ENCODE measurements at regions of chr12 and their contacts with region 1.

Region 1: GRCh38 chr12:125183187-125184067 is 118.2 kb downstream of the AACS start:
- DNase-seq: peak; percentile 66
- H3K4me3 ChIP-seq: no peak overlapping the region
- H3K27ac ChIP-seq: no peak overlapping the region
- H3K4me1 ChIP-seq: no peaks in the 10 kb centered on the region
- H3K27me3 ChIP-seq: peaks cover 33 to 38% of the 10 kb centered on the region in 2 experiments
- CTCF ChIP-seq: peak; percentile 94 to 99
- POLR2A ChIP-seq: no peak

Region 2: GRCh38 chr12:124767066-124767821 is 416.2 kb before region 1 on chr12:
- CTCF ChIA-PET with region 1: no interaction called
- POLR2A ChIA-PET with region 1: no interaction called
- dilution Hi-C with region 1: no loop called
- intact Hi-C with region 1: no loop called
- DNase-seq: peak; percentile 58
- H3K4me3 ChIP-seq: no peak overlapping the region
- H3K27ac ChIP-seq: no peak overlapping the region
- H3K4me1 ChIP-seq: no peaks in the 10 kb centered on the region
- H3K27me3 ChIP-seq: no peaks in the 10 kb centered on the region
- CTCF ChIP-seq: peak; percentile 95 to 96
- POLR2A ChIP-seq: no peak

Region 3: DNA sequence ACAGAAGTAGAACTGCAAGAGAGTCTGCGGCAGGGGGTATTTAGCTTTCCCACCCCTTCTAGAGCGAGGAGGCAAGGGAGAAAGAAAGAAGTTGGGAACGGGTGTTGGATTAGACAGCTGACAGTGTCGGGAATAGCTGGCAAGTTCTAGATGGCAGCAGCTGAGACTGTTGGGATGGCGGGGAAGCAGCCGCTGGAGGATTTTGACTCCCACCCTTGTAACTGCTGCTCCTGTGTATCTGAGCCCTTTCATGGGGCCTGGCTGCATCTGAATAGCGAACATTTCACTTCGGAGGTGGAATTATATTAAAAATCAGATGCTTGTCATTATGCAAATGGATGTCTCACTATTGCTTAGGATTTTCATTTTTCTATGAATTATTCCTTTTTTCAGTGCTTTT is 13.6 kb before region 1 on chr12:
- CTCF ChIA-PET with region 1: interaction called, 11 read pairs
- POLR2A ChIA-PET with region 1: no interaction called
- dilution Hi-C with region 1: no loop called
- intact Hi-C with region 1: no loop called
- DNase-seq: no peak
- H3K4me3 ChIP-seq: no peak overlapping the region
- H3K27ac ChIP-seq: no peak overlapping the region
- H3K4me1 ChIP-seq: no peaks in the 10 kb centered on the region
- H3K27me3 ChIP-seq: no peaks in the 10 kb centered on the region
- CTCF ChIP-seq: no peak
- POLR2A ChIP-seq: no peak

Region 4: GRCh38 chr12:125203145-125203765 is 19.8 kb after region 1 on chr12:
- CTCF ChIA-PET with region 1: interaction called, 45 read pairs
- POLR2A ChIA-PET with region 1: no interaction called
- dilution Hi-C with region 1: no loop called
- intact Hi-C with region 1: no loop called
- DNase-seq: peak; percentile 8
- H3K4me3 ChIP-seq: no peak overlapping the region
- H3K27ac ChIP-seq: no peak overlapping the region
- H3K4me1 ChIP-seq: no peaks in the 10 kb centered on the region
- H3K27me3 ChIP-seq: no peaks in the 10 kb centered on the region
- CTCF ChIP-seq: peak; percentile 33 to 39
- POLR2A ChIP-seq: no peak

Region 5: GRCh38 chr12:125330645-125331341 is 147.4 kb after region 1 on chr12:
- CTCF ChIA-PET with region 1: no interaction called
- POLR2A ChIA-PET with region 1: no interaction called
- dilution Hi-C with region 1: no loop called
- intact Hi-C with region 1: loop called (anchors 5 kb)
- DNase-seq: peak; percentile 16
- H3K4me3 ChIP-seq: no peak overlapping the region
- H3K27ac ChIP-seq: no peak overlapping the region
- H3K4me1 ChIP-seq: no peaks in the 10 kb centered on the region
- H3K27me3 ChIP-seq: no peaks in the 10 kb centered on the region
- CTCF ChIP-seq: peak; percentile 69 to 86
- POLR2A ChIP-seq: no peak

Region 6: GRCh38 chr12:125402874-125403789 is 219.7 kb after region 1 on chr12:
- CTCF ChIA-PET with region 1: interaction called, 128 read pairs
- POLR2A ChIA-PET with region 1: no interaction called
- dilution Hi-C with region 1: no loop called
- intact Hi-C with region 1: no loop called
- DNase-seq: peak; percentile 24
- H3K4me3 ChIP-seq: no peak overlapping the region
- H3K27ac ChIP-seq: no peak overlapping the region
- H3K4me1 ChIP-seq: no peaks in the 10 kb centered on the region
- H3K27me3 ChIP-seq: no peaks in the 10 kb centered on the region
- CTCF ChIP-seq: peak; percentile 19 to 41
- POLR2A ChIP-seq: no peak

Region 7: GRCh38 chr12:126069549-126070165 is 886.2 kb after region 1 on chr12:
- CTCF ChIA-PET with region 1: interaction called, 3 read pairs
- POLR2A ChIA-PET with region 1: no interaction called
- dilution Hi-C with region 1: no loop called
- intact Hi-C with region 1: loop called (anchors 10 kb)
- DNase-seq: peak; percentile 2
- H3K4me3 ChIP-seq: no peak overlapping the region
- H3K27ac ChIP-seq: no peak overlapping the region
- H3K4me1 ChIP-seq: no peaks in the 10 kb centered on the region
- H3K27me3 ChIP-seq: no peaks in the 10 kb centered on the region
- CTCF ChIP-seq: peak; percentile 30 to 46
- POLR2A ChIP-seq: no peak